Activated B cell treated with CpG ODN at 0.5 μM for 24 hours (primary cell): ENCODE measurements at regions of chr18 and their contacts with region 1.

Region 1: GRCh38 chr18:56085551-56085950 is 497.6 kb upstream of the TCF4 start:
- DNase-seq: no peak
- ATAC-seq: no peak
- H3K4me3 Mint-ChIP-seq: no peak overlapping the region
- H3K27ac Mint-ChIP-seq: no peak overlapping the region
- H3K4me1 Mint-ChIP-seq: peaks cover 17% of the 10 kb centered on the region
- H3K27me3 Mint-ChIP-seq: no peaks in the 10 kb centered on the region
- CTCF ChIP-seq: no peak

Region 2: DNA sequence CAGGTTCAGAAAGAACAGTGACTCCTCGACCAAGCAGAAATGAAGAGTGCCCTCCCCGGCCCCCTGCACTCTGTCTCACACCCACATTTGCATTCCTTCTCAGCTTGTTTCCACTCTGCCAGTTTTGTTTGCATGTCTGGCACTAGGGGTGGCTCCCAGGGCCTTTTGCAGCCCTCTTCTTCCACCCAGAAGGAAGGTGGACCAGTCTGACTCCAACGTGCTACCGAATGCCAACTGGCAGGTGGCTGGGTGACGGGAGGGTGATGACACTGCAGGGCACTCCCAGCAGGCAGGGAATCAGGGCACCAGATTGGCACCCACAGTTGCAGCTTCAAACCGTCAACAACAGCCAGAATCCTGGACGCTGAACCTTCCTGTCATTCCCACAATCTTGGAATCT is 181.8 kb after region 1 on chr18:
- CTCF ChIA-PET with region 1: no interaction called
- POLR2A ChIA-PET with region 1: no interaction called
- intact Hi-C with region 1: loop called (anchors 5 kb)
- DNase-seq: peak; percentile 22
- ATAC-seq: peak; percentile 96
- H3K4me3 Mint-ChIP-seq: peak overlapping the region; percentile 74
- H3K27ac Mint-ChIP-seq: peak overlapping the region; percentile 53
- H3K4me1 Mint-ChIP-seq: peaks cover 45% of the 10 kb centered on the region
- H3K27me3 Mint-ChIP-seq: no peaks in the 10 kb centered on the region
- CTCF ChIP-seq: no peak

Region 3: GRCh38 chr18:56337507-56337906 is 252.0 kb after region 1 on chr18:
- CTCF ChIA-PET with region 1: no interaction called
- POLR2A ChIA-PET with region 1: no interaction called
- intact Hi-C with region 1: no loop called
- DNase-seq: no peak
- ATAC-seq: no peak
- H3K4me3 Mint-ChIP-seq: no peak overlapping the region
- H3K27ac Mint-ChIP-seq: no peak overlapping the region
- H3K4me1 Mint-ChIP-seq: peaks cover 12% of the 10 kb centered on the region
- H3K27me3 Mint-ChIP-seq: no peaks in the 10 kb centered on the region
- CTCF ChIP-seq: no peak